WTC11 (cell line): ENCODE measurements at regions of chr3 and their contacts with region 1.

Region 1: GRCh38 chr3:64319391-64319790 is 94.1 kb upstream of the PRICKLE2 start:
- DNase-seq: peak; percentile 60
- ATAC-seq: peak; percentile 99
- H3K4me3 Mint-ChIP-seq: no peak overlapping the region
- H3K27ac Mint-ChIP-seq: peak overlapping the region; percentile 53; the same call in 1 of the 2 replicates
- H3K4me1 Mint-ChIP-seq: peaks cover 15% of the 10 kb centered on the region
- H3K27me3 Mint-ChIP-seq: no peaks in the 10 kb centered on the region
- CTCF ChIP-seq: no peak

Region 2: GRCh38 chr3:64484289-64484992 is 165.1 kb after region 1 on chr3:
- CTCF ChIA-PET with region 1: interaction called, 16 read pairs
- POLR2A ChIA-PET with region 1: no interaction called
- DNase-seq: peak; percentile 93
- ATAC-seq: peak; percentile 85
- H3K4me3 Mint-ChIP-seq: no peak overlapping the region
- H3K27ac Mint-ChIP-seq: no peak overlapping the region
- H3K4me1 Mint-ChIP-seq: peaks cover 6% of the 10 kb centered on the region
- H3K27me3 Mint-ChIP-seq: peaks cover under 1% of the 10 kb centered on the region; the same call in 1 of the 2 replicates
- CTCF ChIP-seq: peak; percentile 93